HepG2 (cell line): ENCODE measurements at regions of chr7 and their contacts with region 1.

Region 1: DNA sequence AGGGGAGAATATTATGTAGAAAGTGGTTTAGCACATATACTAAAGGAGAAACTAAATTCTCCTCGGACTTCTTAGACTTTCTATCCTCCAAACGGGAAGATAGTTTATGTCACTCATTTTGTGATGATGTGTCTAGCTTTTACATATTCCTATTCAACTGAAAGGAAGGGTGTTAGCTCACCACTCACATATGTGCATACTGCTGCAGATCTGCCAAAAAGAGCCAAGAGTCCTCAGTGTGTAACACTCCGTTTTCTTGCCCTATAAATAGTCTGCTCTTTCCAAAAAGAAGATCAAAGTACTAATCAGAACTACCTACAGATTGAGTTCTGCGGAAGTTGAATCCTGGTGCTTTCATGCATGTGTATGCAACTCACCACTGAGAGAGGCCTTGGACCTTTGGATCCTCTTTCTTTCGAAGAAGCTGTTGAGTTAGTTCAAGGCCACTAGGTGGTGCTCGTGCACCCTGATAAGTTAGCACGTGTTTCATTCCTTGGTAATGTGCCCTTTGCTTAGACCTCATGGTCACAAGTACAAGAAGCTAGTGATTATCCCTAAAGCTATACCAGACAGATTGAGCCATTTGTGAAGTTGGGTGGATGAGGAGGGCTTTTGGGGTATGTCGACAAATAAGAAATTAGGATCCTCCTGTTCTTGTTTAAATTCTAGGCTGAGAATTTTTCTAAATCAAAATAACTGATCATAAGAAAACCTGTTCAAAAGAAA is 14.1 kb downstream of the YAE1 start:
- DNase-seq: peak; percentile 88
- ATAC-seq: peak; percentile 93
- H3K4me3 ChIP-seq: no peak overlapping the region; a peak in 1 of 6 replicates
- H3K27ac ChIP-seq: peak overlapping the region; percentile 31
- H3K4me1 ChIP-seq: peaks cover 15% of the 10 kb centered on the region
- H3K27me3 ChIP-seq: no peaks in the 10 kb centered on the region
- CTCF ChIP-seq: peak; percentile 96
- EP300 ChIP-seq: peak in 1 of 2 experiments; percentile 25; a peak in 1 of 4 replicates
- POLR2A ChIP-seq: no peak
- RAD21 ChIP-seq: peak; percentile 84

Region 2: GRCh38 chr7:39016604-39017003 is 563.7 kb before region 1 on chr7:
- CTCF ChIA-PET with region 1: no interaction called
- POLR2A ChIA-PET with region 1: no interaction called
- in situ Hi-C with region 1: no loop called
- intact Hi-C with region 1: no loop called
- DNase-seq: peak; percentile 1
- ATAC-seq: no peak; the same call in 2 of the 3 replicates
- H3K4me3 ChIP-seq: no peak overlapping the region
- H3K27ac ChIP-seq: no peak overlapping the region
- H3K4me1 ChIP-seq: no peaks in the 10 kb centered on the region
- H3K27me3 ChIP-seq: no peaks in the 10 kb centered on the region
- CTCF ChIP-seq: no peak
- EP300 ChIP-seq: no peak
- POLR2A ChIP-seq: no peak
- RAD21 ChIP-seq: no peak

Region 3: DNA sequence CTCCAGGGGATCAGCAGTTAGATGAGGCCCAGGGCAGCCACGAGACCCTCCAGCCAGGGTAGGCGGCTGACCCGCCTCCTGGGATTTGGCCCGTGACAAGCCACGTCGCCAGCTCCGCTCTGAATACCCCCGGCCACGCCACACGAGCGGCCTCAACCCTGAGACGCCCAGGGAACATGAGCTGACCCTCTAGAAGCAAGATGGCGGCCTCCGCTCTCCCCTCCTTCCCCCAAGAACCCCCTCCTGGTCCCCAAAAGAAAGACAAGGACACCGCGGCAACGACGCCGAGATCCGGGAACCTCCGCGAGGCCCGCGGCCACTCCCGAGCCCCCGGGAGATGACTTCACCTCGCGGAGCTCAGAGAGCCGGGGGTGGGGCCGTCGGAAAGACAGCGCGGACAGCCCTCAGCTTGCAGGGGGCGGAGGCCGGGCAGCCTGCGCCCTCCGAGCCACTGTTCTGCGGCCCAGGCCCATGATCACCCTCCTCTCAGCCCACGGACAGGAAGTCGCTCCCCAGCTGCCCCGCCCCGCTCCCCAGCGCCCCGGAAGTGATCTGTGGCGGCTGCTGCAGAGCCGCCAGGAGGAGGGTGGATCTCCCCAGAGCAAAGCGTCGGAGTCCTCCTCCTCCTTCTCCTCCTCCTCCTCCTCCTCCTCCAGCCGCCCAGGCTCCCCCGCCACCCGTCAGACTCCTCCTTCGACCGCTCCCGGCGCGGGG is 42.9 kb after region 1 on chr7 and contains the start of gene RALA:
- CTCF ChIA-PET with region 1: no interaction called
- POLR2A ChIA-PET with region 1: interaction called, 5 read pairs
- in situ Hi-C with region 1: no loop called
- intact Hi-C with region 1: loop called (anchors 5 kb)
- DNase-seq: peak; percentile 84
- ATAC-seq: peak; percentile 98
- H3K4me3 ChIP-seq: peak within 1 kb of the TSS; percentile 79 to 87 (median 86)
- H3K27ac ChIP-seq: peak within 1 kb of the TSS; percentile 94
- H3K4me1 ChIP-seq: peaks cover 49% of the 10 kb centered on the region
- H3K27me3 ChIP-seq: no peaks in the 10 kb centered on the region
- CTCF ChIP-seq: no peak
- EP300 ChIP-seq: no peak
- POLR2A ChIP-seq: peak; percentile 89 to 91
- RAD21 ChIP-seq: 0 out of 2 replicates have a peak, but pooled peaks have one; percentile 31
- total RNA-seq, gene RALA: 11.8 and 23.0 TPM in 2 replicates

Region 4: GRCh38 chr7:39746103-39746819 is 165.9 kb after region 1 on chr7:
- CTCF ChIA-PET with region 1: interaction called, 53 read pairs
- POLR2A ChIA-PET with region 1: interaction called, 5 read pairs
- in situ Hi-C with region 1: loop called (anchors 5 kb)
- intact Hi-C with region 1: loop called (anchors 1 kb)
- DNase-seq: peak; percentile 54
- ATAC-seq: peak; percentile 72
- H3K4me3 ChIP-seq: no peak overlapping the region
- H3K27ac ChIP-seq: no peak overlapping the region
- H3K4me1 ChIP-seq: peaks cover 20% of the 10 kb centered on the region
- H3K27me3 ChIP-seq: no peaks in the 10 kb centered on the region
- CTCF ChIP-seq: peak; percentile 84
- EP300 ChIP-seq: no peak
- POLR2A ChIP-seq: no peak
- RAD21 ChIP-seq: peak; percentile 68

Region 5: DNA sequence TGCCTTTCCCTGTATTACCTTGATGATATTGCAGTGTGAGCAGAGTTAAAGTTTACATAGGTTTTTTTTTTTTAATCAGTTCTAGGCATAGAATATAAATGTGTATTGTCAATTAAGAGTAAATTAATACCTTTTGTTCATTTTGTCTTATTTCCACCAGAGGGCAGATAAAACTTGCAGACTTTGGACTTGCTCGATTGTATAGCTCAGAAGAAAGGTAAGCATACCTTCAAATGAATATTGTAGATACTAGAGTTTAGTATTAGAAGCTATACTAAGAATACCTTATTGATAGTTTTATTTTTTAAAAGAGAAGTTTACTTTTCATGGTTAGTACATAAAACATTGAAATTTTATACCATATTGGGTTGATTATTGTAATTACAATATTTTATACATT is 467.3 kb after region 1 on chr7:
- CTCF ChIA-PET with region 1: no interaction called
- POLR2A ChIA-PET with region 1: no interaction called
- in situ Hi-C with region 1: no loop called
- intact Hi-C with region 1: loop called (anchors 10 kb)
- DNase-seq: peak; percentile 4
- ATAC-seq: no peak
- H3K4me3 ChIP-seq: no peak overlapping the region
- H3K27ac ChIP-seq: no peak overlapping the region
- H3K4me1 ChIP-seq: no peaks in the 10 kb centered on the region
- H3K27me3 ChIP-seq: no peaks in the 10 kb centered on the region
- CTCF ChIP-seq: no peak
- EP300 ChIP-seq: no peak
- POLR2A ChIP-seq: no peak
- RAD21 ChIP-seq: no peak